Panc1 (cell line): ENCODE measurements at regions of chr1 and their contacts with region 1.

Region 1: GRCh38 chr1:84936116-84936810 is 43.3 kb upstream of the LPAR3 start:
- DNase-seq: peak; percentile 64
- ATAC-seq: peak; percentile 80
- H3K4me3 ChIP-seq: no peak overlapping the region
- H3K27ac ChIP-seq: no peak overlapping the region
- H3K4me1 ChIP-seq: no peaks in the 10 kb centered on the region
- H3K27me3 ChIP-seq: no peaks in the 10 kb centered on the region
- CTCF ChIP-seq: peak; percentile 99

Region 2: DNA sequence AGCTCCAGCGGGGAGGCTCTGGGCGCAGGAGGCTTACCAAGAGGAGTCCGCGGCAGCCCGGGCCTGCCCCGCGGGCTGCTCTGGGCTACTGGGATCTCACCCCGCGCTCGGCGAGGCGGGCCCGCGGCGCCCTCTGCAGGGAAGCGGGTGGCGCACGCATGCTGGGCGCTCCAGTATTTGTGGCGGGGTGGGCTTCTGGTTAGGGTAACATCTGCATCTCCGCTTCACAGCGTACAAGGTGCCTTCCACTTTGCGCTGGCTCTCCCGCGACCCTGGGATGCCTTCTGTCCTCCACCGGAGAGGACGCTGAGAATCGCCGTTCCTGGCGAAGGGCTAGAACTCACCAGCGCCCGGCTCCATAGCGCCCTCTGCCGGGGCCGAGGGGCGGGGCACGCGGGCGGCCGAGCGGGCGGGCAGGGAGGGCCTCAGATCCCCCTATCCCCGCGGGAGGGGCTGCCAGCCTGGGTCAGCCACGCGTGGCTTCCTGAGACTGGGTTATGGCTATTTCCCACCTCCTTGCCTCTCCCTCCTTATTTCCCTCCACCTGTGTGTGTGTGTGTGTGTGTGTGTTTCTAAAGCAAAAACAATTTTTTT is 315.4 kb before region 1 on chr1:
- CTCF ChIA-PET with region 1: no interaction called
- POLR2A ChIA-PET with region 1: no interaction called
- in situ Hi-C with region 1: no loop called
- intact Hi-C with region 1: loop called (anchors 10 kb)
- DNase-seq: no peak
- ATAC-seq: peak; percentile 97
- H3K4me3 ChIP-seq: peak overlapping the region; percentile 56 to 61
- H3K27ac ChIP-seq: peak overlapping the region; percentile 80
- H3K4me1 ChIP-seq: peaks cover 9% of the 10 kb centered on the region; the same call in 1 of the 2 replicates
- H3K27me3 ChIP-seq: no peaks in the 10 kb centered on the region
- CTCF ChIP-seq: peak; percentile 100

Region 3: DNA sequence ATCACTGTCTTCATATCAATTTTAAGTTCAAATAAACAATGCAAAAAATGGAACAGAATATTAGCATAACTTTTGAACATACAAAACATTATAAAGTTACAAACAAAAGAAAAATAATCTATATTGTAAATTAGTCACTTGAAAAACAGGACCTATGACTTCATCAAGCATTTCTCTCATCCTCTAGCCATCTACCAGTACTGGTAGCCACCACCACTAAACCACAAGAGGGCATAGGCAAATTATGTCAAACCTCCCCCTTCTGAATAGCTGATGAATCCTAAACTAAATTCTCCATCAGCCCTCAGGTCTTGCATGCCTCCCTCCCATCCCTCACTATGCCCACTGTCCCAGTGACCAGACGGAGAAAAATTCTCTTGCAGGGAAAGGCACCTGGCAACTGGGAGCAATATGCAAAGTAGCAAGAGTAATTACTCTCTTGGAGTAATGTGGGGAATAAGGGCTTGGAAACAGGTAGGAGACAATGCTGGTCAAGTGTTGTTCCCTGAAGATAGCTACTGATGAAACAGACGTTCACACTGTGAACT is 283.1 kb before region 1 on chr1:
- CTCF ChIA-PET with region 1: no interaction called
- POLR2A ChIA-PET with region 1: no interaction called
- in situ Hi-C with region 1: no loop called
- intact Hi-C with region 1: loop called (anchors 10 kb)
- DNase-seq: no peak
- ATAC-seq: peak; percentile 76
- H3K4me3 ChIP-seq: no peak overlapping the region
- H3K27ac ChIP-seq: no peak overlapping the region
- H3K4me1 ChIP-seq: no peaks in the 10 kb centered on the region
- H3K27me3 ChIP-seq: no peaks in the 10 kb centered on the region
- CTCF ChIP-seq: peak; percentile 45

Region 4: DNA sequence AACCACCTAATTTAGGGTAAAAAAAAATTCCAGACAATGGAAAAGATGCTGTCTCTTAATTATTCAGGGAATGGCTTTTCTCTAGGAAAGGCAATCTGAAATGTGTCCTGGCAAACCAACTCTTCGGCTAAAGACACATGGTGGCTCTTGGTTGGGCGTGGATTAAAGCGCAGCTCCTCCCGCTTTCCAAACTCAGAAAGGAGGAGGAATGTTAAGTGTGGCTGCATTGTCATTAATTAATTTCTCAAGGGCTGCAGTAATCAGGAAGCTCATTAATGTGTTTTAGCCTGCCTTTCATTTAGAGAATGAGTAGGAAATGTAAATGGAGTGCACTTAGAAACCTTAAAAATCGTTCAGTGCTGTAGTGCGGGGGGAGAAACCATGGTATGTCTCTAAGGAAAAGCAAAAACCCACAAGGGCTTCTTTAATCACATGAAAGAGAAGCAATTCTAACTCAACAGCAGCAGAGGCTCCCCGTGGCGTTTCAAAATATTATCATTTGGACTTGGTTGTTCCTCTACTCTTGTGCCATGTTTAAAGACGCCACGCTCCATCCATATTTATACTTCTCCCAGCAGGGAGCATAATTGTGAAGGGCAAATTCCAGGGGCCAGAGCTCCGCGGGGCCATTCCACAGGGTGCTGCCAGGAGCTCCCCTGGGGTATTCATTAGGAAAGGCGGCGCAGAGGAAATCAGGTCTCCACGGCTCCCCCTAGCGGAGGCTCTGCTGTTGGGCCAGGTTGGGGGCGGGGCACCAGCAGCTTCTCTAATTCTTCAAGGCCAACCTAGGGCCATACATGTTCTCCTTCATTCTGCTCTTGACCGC is 154.1 kb before region 1 on chr1:
- CTCF ChIA-PET with region 1: interaction called, 8 read pairs
- POLR2A ChIA-PET with region 1: no interaction called
- in situ Hi-C with region 1: no loop called
- intact Hi-C with region 1: loop called (anchors 1 kb)
- DNase-seq: peak; percentile 69
- ATAC-seq: peak; percentile 90
- H3K4me3 ChIP-seq: peak overlapping the region; percentile 4 to 44; a peak in 3 of 4 replicates
- H3K27ac ChIP-seq: peak overlapping the region; percentile 35; the same call in 1 of the 2 replicates
- H3K4me1 ChIP-seq: peaks cover 15% of the 10 kb centered on the region
- H3K27me3 ChIP-seq: no peaks in the 10 kb centered on the region; the same call in 1 of the 2 replicates
- CTCF ChIP-seq: peak; percentile 100

Region 5: DNA sequence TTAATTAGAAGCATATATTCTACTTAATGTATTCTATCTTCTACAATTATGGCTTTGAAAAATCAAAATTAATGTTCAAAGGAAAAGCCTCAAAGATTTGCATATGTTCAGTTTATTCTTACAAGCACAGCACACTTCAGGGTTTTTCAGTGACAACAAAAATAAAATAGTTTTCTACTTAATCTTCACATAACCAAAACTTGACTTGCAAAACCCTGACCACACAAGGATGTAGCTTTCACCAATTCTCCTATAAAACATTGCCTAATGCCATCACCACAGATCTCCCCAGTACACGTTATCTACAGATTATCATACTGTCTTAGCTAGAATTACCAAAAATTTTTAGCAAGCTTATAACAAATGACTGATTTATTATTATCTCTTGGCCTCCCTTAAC is 66.5 kb before region 1 on chr1:
- CTCF ChIA-PET with region 1: no interaction called
- POLR2A ChIA-PET with region 1: no interaction called
- in situ Hi-C with region 1: no loop called
- intact Hi-C with region 1: loop called (anchors 10 kb)
- DNase-seq: no peak
- ATAC-seq: no peak
- H3K4me3 ChIP-seq: no peak overlapping the region
- H3K27ac ChIP-seq: no peak overlapping the region
- H3K4me1 ChIP-seq: no peaks in the 10 kb centered on the region
- H3K27me3 ChIP-seq: peaks cover 13% of the 10 kb centered on the region
- CTCF ChIP-seq: no peak